ENCODE measurements at regions of chr15 and their contacts with region 1.

Region 1: DNA sequence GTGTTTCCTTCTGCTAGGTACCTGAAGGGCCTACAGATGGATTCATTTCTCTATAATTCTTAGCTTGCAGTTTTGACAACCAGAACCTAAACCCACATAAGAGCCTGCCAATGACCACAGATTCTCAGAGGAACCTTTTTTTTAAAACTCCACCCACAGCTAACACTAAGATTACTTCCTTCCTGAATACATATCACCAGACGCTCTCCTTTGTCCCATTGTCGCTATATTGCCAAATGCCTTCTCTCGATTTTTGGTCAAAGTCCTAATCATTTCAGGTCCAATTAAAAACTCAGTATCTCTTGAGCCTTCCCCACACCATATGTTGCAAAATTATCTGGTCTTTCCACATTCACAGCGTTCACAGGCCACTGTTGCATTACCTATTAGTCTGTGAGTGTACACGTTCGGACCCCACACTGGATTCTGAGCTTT is 12.4 kb downstream of the ZNF710 start:
- DNase-seq: peak in 7 of 9 donors; percentile 40 to 83 (median 77)
- ATAC-seq: peak; percentile 94
- H3K4me3 ChIP-seq: peak overlapping the region; percentile 17
- H3K4me3 Mint-ChIP-seq: peak overlapping the region; percentile 7 to 81 (median 69)
- H3K27ac ChIP-seq: peak overlapping the region; percentile 3
- H3K27ac Mint-ChIP-seq: peak overlapping the region in 8 of 9 donors; percentile 9 to 81 (median 35)
- H3K4me1 ChIP-seq: peaks cover 16 to 27% of the 10 kb centered on the region in 2 donors
- H3K4me1 Mint-ChIP-seq: peaks cover 47 to 69% (median 54%) of the 10 kb centered on the region in 7 donors
- H3K27me3 ChIP-seq: no peaks in the 10 kb centered on the region
- H3K27me3 Mint-ChIP-seq: no peaks in the 10 kb centered on the region

Region 2: DNA sequence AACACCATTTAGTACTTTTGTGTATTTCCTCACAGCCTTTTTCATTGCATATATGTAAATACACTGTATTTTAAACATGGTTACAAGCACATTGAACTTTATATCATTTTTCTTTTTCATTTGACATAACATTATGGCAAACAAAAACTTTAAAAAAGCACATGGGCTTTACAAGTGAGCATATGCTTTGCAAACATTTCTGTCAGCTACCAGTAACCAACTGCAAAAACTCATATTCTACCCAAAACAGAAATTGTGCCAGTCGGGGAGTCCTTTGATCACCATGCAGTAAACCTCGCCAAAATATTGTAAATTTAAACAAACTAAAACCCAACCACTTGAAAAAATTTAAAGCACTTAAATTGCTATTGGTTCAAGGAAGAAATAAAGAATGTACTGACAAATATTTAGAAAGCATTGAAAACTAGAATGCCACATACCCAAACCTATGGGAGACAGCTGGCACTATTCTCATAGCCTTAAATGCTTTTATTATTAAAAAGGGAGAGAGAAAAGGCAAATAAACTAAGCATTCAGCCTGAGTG is 12.0 kb after region 1 on chr15:
- CTCF ChIA-PET with region 1: interaction called, 4 read pairs
- POLR2A ChIA-PET with region 1: interaction called, 4 read pairs
- intact Hi-C with region 1: loop called in 1 of 2 experiments (anchors 2 kb)
- DNase-seq: no peak
- ATAC-seq: no peak
- H3K4me3 ChIP-seq: no peak overlapping the region
- H3K4me3 Mint-ChIP-seq: no peak overlapping the region
- H3K27ac ChIP-seq: no peak overlapping the region
- H3K27ac Mint-ChIP-seq: no peak overlapping the region
- H3K4me1 ChIP-seq: no peaks in the 10 kb centered on the region
- H3K4me1 Mint-ChIP-seq: peaks cover 0 to 32% (median 24%) of the 10 kb centered on the region in 7 donors
- H3K27me3 ChIP-seq: no peaks in the 10 kb centered on the region
- H3K27me3 Mint-ChIP-seq: no peaks in the 10 kb centered on the region

Region 3: DNA sequence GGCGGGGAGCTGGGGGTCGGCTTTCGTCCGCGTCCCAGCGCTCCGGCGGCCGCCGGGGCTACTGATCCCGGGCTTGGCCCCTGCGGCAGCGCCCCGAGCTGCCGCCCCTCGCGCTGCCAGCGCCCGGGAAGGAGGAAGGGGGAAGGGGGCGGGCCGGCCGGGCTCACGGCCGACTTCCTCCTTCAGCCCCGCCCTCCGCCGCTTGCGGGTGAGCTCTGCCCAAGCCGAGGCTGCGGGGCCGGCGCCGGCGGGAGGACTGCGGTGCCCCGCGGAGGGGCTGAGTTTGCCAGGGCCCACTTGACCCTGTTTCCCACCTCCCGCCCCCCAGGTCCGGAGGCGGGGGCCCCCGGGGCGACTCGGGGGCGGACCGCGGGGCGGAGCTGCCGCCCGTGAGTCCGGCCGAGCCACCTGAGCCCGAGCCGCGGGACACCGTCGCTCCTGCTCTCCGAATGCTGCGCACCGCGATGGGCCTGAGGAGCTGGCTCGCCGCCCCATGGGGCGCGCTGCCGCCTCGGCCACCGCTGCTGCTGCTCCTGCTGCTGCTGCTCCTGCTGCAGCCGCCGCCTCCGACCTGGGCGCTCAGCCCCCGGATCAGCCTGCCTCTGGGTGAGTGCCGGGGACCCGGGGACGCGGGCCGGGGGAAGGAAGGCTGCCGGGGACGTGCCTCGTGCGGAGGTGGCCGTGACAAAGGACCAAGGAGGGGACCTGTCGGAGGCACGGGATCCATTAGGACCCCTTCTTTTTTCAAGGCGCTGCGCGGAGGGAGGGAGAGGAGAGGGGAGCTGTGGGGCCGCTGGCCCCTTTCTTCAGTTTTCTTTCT is 187.8 kb after region 1 on chr15 and contains the start of gene SEMA4B:
- CTCF ChIA-PET with region 1: no interaction called
- POLR2A ChIA-PET with region 1: no interaction called
- intact Hi-C with region 1: no loop called
- DNase-seq: peak; percentile 56 to 81 (median 70)
- ATAC-seq: peak; percentile 92
- H3K4me3 ChIP-seq: peak within 1 kb of the TSS; percentile 67
- H3K4me3 Mint-ChIP-seq: peak within 1 kb of the TSS; percentile 84 to 96 (median 89)
- H3K27ac ChIP-seq: peak within 1 kb of the TSS; percentile 85
- H3K27ac Mint-ChIP-seq: peak within 1 kb of the TSS; percentile 66 to 90 (median 82)
- H3K4me1 ChIP-seq: peaks cover 11 to 23% of the 10 kb centered on the region in 2 donors
- H3K4me1 Mint-ChIP-seq: peaks cover 21 to 36% (median 25%) of the 10 kb centered on the region in 7 donors
- H3K27me3 ChIP-seq: no peaks in the 10 kb centered on the region
- H3K27me3 Mint-ChIP-seq: peaks cover 0 to 3% (median 0%) of the 10 kb centered on the region in 5 donors
- total RNA-seq, gene SEMA4B: 15.9 to 31.0 (median 20.7) TPM